GM18951 (cell line): ENCODE measurements at regions of chr7 and their contacts with region 1.

Region 1: GRCh38 chr7:25093268-25093826 is 31.7 kb downstream of the CYCS start:
- POLR2A ChIP-seq: no peak

Region 2: GRCh38 chr7:24572997-24573625 is 520.2 kb before region 1 on chr7 and contains the start of gene PALS2:
- in situ Hi-C with region 1: loop called (anchors 25 kb)
- POLR2A ChIP-seq: peak; percentile 58

Region 3: DNA sequence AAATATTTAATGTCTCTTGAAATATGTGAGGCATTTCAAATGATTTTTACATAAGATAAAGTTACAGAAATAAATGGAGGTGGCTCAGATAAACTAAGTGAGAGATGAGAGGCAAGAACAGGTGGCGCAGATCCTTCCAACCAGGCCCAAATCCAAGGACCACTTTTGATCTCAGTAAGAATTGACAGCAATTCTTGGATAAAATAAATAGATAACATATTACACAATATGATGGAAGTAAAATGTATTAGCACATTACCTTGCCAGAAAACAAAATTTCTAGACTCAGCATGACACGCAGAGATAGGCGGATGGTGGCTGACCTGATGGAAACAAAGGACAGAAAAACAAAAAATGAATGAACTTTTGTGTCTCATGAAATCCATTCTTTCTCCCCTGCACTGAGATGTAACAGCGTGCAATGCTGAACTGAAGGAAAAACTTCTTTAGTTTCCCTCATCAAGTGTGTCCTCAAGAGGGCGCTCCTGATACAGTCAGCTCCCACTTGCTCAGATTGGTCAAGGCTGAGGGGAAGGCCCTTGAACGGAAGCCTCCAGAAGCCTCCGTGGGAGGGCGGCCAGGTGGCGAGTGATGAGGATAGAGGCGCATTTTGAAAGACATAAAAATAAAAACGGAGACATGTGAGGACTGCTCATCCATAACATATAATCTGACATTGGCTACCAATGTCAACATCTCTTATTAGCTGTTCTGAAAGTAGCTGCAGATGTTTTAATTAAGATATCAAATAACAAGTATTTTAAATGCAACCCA is 273.2 kb before region 1 on chr7:
- in situ Hi-C with region 1: loop called (anchors 5 kb)
- POLR2A ChIP-seq: no peak

Region 4: GRCh38 chr7:25500393-25500921 is 407.1 kb after region 1 on chr7:
- in situ Hi-C with region 1: no loop called
- POLR2A ChIP-seq: no peak